Activated T-helper 1 cell treated with anti-CD3 and anti-CD28 coated beads, Interleukin-12 subunit alpha, Interleukin-12 subunit beta, Interleukin-2, Interleukin-4 antibody, amounts not matched to agents 30 ng/mL and 10 ng/mL and 1 ng/mL, durations not matched to agents 14 hours and 24 hours and 36 hours (primary cell): ENCODE measurements at regions of chr6 and their contacts with region 1.

Region 1: GRCh38 chr6:134984821-134985220 is 34.9 kb upstream of the ALDH8A1 start:
- DNase-seq: no peak
- H3K4me3 Mint-ChIP-seq: no peak overlapping the region
- H3K27ac Mint-ChIP-seq: no peak overlapping the region
- H3K4me1 Mint-ChIP-seq: peaks cover 58% of the 10 kb centered on the region
- H3K27me3 Mint-ChIP-seq: no peaks in the 10 kb centered on the region

Region 2: GRCh38 chr6:134247231-134247833 is 737.5 kb before region 1 on chr6:
- intact Hi-C with region 1: loop called (anchors 5 kb)
- DNase-seq: peak; percentile 82
- H3K4me3 Mint-ChIP-seq: peak overlapping the region; percentile 37
- H3K27ac Mint-ChIP-seq: peak overlapping the region; percentile 91
- H3K4me1 Mint-ChIP-seq: peaks cover 58% of the 10 kb centered on the region
- H3K27me3 Mint-ChIP-seq: no peaks in the 10 kb centered on the region

Region 3: GRCh38 chr6:134995536-134995935 is 10.7 kb after region 1 on chr6:
- intact Hi-C with region 1: loop called (anchors 1 kb)
- DNase-seq: no peak
- H3K4me3 Mint-ChIP-seq: no peak overlapping the region
- H3K27ac Mint-ChIP-seq: no peak overlapping the region
- H3K4me1 Mint-ChIP-seq: peaks cover 23% of the 10 kb centered on the region
- H3K27me3 Mint-ChIP-seq: no peaks in the 10 kb centered on the region